Body of pancreas (tissue), 4 donors: ENCODE measurements at regions of chr1 and their contacts with region 1.

Region 1: DNA sequence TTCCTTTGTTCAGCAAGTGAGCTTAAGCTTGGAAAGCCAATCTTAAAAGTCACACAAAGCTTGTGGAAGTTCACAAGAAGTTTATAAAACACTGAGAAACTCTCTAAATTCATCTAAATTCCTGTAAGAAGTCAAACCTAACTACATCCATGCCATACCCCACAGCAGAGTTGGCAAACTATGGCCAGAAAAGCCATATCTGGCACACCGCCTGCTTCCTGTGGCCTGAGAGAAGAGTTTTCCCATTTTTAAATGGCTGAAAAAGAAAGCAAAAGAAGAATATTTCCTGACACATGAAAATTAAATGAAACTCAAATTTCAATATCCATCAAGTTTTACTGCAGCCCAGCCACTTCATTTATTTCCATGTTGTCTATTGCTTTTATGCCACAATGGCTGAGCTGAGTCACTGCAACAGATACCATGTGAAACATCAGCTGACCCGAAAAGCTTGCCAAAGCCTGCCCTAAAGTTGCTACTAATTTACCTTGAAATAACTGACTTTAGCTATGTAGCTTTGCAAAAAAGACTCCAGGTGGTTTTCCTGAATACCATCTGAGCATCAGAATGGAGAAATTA is 237.1 kb downstream of the SLC45A1 start:
- DNase-seq: peak; percentile 34 to 61 (median 53)
- ATAC-seq: no peak
- H3K4me3 ChIP-seq: no peak overlapping the region
- H3K27ac ChIP-seq: no peak overlapping the region
- H3K4me1 ChIP-seq: peaks cover 31% of the 10 kb centered on the region
- H3K27me3 ChIP-seq: no peaks in the 10 kb centered on the region
- CTCF ChIP-seq: no peak
- POLR2A ChIP-seq: no peak

Region 2: DNA sequence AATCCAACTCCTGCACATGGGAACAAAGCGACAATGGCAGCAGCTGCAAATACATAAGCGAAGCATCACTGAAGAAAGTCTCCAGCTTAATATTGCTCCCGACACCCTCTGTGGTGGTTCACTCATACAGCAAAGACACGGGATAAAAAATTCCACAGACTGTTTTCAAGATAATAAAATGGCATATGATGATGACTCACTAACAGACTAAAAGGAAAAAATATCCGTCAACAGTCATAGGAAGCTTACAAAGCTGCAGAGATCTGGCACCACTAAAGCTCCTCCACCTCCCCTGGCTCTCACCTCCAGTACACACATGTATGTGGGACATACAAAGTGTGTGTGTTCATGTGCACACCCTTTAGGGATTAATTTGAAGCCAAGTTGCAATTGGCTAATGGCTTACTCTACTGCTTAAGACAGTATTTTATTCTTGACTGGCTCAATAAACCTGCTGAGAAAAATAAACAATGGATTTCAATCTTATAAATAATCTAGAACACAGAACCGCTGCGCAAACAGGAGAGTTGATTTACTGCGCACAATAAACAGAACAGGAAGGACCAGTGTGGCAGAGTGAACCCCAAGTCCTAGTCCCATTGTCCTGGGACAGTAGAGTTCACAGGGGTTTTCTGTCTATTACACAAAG is 142.7 kb before region 1 on chr1:
- intact Hi-C with region 1: no loop called
- DNase-seq: peak in 1 of 4 donors; percentile 62
- ATAC-seq: no peak
- H3K4me3 ChIP-seq: no peak overlapping the region
- H3K27ac ChIP-seq: peak overlapping the region; percentile 19 to 79 (median 55)
- H3K4me1 ChIP-seq: peaks cover 97% of the 10 kb centered on the region
- H3K27me3 ChIP-seq: no peaks in the 10 kb centered on the region
- CTCF ChIP-seq: peak in 1 of 7 experiments; percentile 17
- POLR2A ChIP-seq: no peak

Region 3: GRCh38 chr1:8727809-8728213 is 172.8 kb after region 1 on chr1:
- intact Hi-C with region 1: loop called (anchors 5 kb)
- DNase-seq: peak in 2 of 4 donors; percentile 34 to 37
- ATAC-seq: no peak
- H3K4me3 ChIP-seq: no peak overlapping the region
- H3K27ac ChIP-seq: no peak overlapping the region
- H3K4me1 ChIP-seq: peaks cover 20% of the 10 kb centered on the region
- H3K27me3 ChIP-seq: no peaks in the 10 kb centered on the region
- CTCF ChIP-seq: no peak
- POLR2A ChIP-seq: no peak